ENCODE measurements at regions of chr2 and their contacts with region 1.

Region 1: GRCh38 chr2:74162951-74163350 is 15.2 kb upstream of the BOLA3 start:
- DNase-seq: no peak
- H3K4me3 Mint-ChIP-seq: no peak overlapping the region
- H3K27ac Mint-ChIP-seq: no peak overlapping the region
- H3K4me1 Mint-ChIP-seq: peaks cover 5% of the 10 kb centered on the region
- H3K27me3 Mint-ChIP-seq: no peaks in the 10 kb centered on the region
- CTCF ChIP-seq: no peak

Region 2: DNA sequence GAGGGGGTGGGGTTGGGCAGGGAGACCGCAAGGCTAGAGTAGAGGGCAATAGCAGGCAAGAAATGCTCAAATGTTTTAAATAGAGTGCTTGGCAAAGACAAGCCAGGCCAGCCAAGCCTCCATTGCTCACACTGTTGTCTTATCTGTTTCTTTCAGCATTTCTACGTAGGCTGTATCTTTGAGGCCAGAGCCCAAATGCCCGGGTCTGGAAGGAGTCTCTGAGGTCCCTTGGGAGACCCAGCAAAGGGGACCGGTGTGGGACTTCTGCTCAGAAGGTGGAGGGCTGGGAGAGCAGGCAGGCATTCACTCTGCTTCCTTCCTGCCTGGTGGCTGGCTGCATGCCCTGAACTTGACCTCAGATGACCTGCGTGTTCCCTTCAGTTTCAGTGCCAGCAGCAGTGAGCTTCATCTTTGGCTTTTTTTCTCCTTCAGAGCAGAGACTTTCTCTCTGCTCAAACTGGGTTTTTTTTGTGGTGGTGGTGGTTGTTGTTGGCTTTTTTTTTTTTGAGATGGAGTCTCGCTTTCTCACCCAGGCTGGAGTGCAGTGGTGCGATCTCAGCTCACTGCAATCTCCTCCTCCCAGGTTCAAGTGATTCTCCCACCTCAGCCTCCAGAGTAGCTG is 192.0 kb before region 1 on chr2:
- CTCF ChIA-PET with region 1: no interaction called
- POLR2A ChIA-PET with region 1: no interaction called
- intact Hi-C with region 1: no loop called
- DNase-seq: no peak
- H3K4me3 Mint-ChIP-seq: no peak overlapping the region
- H3K27ac Mint-ChIP-seq: no peak overlapping the region
- H3K4me1 Mint-ChIP-seq: no peaks in the 10 kb centered on the region
- H3K27me3 Mint-ChIP-seq: no peaks in the 10 kb centered on the region
- CTCF ChIP-seq: no peak

Region 3: GRCh38 chr2:74147727-74148456 is 15.1 kb before region 1 on chr2 and contains the start of gene BOLA3:
- CTCF ChIA-PET with region 1: interaction called, 17 read pairs
- POLR2A ChIA-PET with region 1: no interaction called
- intact Hi-C with region 1: no loop called
- DNase-seq: peak; percentile 80
- H3K4me3 Mint-ChIP-seq: no peak within 1 kb of the TSS
- H3K27ac Mint-ChIP-seq: no peak within 1 kb of the TSS
- H3K4me1 Mint-ChIP-seq: no peaks in the 10 kb centered on the region
- H3K27me3 Mint-ChIP-seq: no peaks in the 10 kb centered on the region
- CTCF ChIP-seq: peak; percentile 70
- total RNA-seq, gene BOLA3: 72.5 and 83.8 TPM in 2 replicates

Measured in MCF 10A (cell line).